Heart left ventricle (tissue), 16 donors: ENCODE measurements at regions of chr3 and their contacts with region 1.

Region 1: GRCh38 chr3:156952011-156952410 is 125.9 kb downstream of the LEKR1 start:
- DNase-seq: no peak
- ATAC-seq: no peak
- H3K4me3 ChIP-seq: no peak overlapping the region
- H3K27ac ChIP-seq: no peak overlapping the region
- H3K4me1 ChIP-seq: no peaks in the 10 kb centered on the region
- H3K27me3 ChIP-seq: no peaks in the 10 kb centered on the region
- CTCF ChIP-seq: no peak
- POLR2A ChIP-seq: no peak

Region 2: GRCh38 chr3:156918746-156919145 is 33.3 kb before region 1 on chr3:
- intact Hi-C with region 1: loop called in 1 of 10 experiments (anchors 5 kb)
- DNase-seq: no peak
- ATAC-seq: no peak
- H3K4me3 ChIP-seq: no peak overlapping the region
- H3K27ac ChIP-seq: no peak overlapping the region
- H3K4me1 ChIP-seq: no peaks in the 10 kb centered on the region
- H3K27me3 ChIP-seq: no peaks in the 10 kb centered on the region
- CTCF ChIP-seq: no peak
- POLR2A ChIP-seq: no peak